A673 (cell line): ENCODE measurements at regions of chr10 and their contacts with region 1.

Region 1: DNA sequence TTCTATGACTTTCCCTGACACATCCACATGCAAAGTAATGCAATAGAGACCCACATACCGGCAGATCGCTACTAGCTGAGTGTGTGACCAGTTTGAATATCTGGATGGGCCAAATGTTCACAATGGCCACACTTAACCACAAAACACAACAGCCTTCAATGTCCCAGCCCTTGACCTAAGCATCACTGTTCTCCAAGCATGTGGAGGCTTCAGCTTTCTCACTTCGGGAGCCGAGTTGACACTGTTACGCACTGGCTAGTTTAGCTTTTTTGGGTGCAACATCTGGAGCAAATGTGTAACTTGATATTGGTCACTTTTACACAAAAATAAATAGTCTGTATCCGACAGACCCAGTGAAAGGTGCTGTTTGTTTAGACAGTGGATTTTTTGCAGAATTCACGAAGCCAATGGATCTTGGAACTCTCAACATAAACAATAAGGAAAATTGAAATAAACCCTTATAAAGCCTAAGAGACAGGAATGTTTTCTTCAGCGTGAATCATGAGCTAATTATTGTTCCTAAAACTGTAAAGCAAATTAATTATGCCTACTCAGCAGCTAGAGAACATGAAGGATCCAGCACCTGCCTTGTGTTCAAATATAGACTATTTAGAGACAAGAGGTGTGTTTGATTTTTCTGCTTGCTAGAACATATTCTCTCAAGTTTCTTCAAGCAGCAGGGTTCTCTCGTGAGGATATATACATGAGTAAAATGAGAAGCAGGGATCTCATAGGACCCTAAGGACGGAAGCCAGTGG is 117.6 kb upstream of the JCAD start:
- DNase-seq: no peak
- H3K4me3 ChIP-seq: no peak overlapping the region
- H3K27ac ChIP-seq: no peak overlapping the region
- H3K4me1 ChIP-seq: no peaks in the 10 kb centered on the region
- H3K27me3 ChIP-seq: no peaks in the 10 kb centered on the region
- CTCF ChIP-seq: no peak

Region 2: GRCh38 chr10:30282221-30282620 is 105.3 kb after region 1 on chr10:
- CTCF ChIA-PET with region 1: no interaction called
- POLR2A ChIA-PET with region 1: interaction called, 18 read pairs
- intact Hi-C with region 1: no loop called
- DNase-seq: no peak
- H3K4me3 ChIP-seq: no peak overlapping the region
- H3K27ac ChIP-seq: no peak overlapping the region
- H3K4me1 ChIP-seq: peaks cover 4% of the 10 kb centered on the region
- H3K27me3 ChIP-seq: no peaks in the 10 kb centered on the region
- CTCF ChIP-seq: no peak

Region 3: GRCh38 chr10:30645340-30645827 is 468.4 kb after region 1 on chr10:
- CTCF ChIA-PET with region 1: no interaction called
- POLR2A ChIA-PET with region 1: no interaction called
- intact Hi-C with region 1: no loop called
- DNase-seq: peak; percentile 7
- H3K4me3 ChIP-seq: no peak overlapping the region
- H3K27ac ChIP-seq: no peak overlapping the region
- H3K4me1 ChIP-seq: peaks cover 4% of the 10 kb centered on the region
- H3K27me3 ChIP-seq: no peaks in the 10 kb centered on the region
- CTCF ChIP-seq: no peak